ENCODE measurements at regions of chr19 and their contacts with region 1.

Region 1: DNA sequence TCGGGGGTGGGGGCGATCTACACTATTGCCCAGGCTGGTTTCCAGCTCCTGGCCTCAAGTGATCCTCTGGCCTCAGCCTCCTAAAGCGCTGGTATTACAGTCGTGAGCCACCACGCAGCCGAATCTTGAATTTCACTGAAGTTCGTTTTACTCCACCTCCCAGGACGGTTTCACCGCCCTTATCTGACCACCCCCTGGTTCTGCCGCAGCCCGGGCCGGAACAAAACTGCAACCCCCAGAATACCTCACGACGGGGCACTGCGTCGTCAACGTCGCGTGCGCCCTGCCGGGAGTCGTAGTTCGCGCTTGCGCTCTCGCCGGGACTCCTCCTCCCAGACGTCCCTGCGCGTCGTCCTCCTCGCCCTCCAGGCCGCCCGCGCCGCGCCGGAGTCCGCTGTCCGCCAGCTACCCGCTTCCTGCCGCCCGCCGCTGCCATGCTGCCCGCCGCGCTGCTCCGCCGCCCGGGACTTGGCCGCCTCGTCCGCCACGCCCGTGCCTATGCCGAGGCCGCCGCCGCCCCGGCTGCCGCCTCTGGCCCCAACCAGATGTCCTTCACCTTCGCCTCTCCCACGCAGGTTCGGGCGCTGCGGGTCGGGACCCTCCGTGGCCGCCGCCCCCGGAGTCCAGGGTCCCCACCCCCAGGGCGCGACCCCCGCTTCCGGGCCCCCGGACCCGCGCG is at the start of gene ATP5F1D:
- DNase-seq: peak; percentile 85
- ATAC-seq: peak; percentile 67
- H3K4me3 Mint-ChIP-seq: peak within 1 kb of the TSS; percentile 86
- H3K27ac Mint-ChIP-seq: peak within 1 kb of the TSS; percentile 74
- H3K4me1 Mint-ChIP-seq: peaks cover 53% of the 10 kb centered on the region
- H3K27me3 Mint-ChIP-seq: peaks cover 7% of the 10 kb centered on the region
- CTCF ChIP-seq: no peak
- total RNA-seq, gene ATP5F1D: 172 and 185 TPM in 2 replicates

Region 2: DNA sequence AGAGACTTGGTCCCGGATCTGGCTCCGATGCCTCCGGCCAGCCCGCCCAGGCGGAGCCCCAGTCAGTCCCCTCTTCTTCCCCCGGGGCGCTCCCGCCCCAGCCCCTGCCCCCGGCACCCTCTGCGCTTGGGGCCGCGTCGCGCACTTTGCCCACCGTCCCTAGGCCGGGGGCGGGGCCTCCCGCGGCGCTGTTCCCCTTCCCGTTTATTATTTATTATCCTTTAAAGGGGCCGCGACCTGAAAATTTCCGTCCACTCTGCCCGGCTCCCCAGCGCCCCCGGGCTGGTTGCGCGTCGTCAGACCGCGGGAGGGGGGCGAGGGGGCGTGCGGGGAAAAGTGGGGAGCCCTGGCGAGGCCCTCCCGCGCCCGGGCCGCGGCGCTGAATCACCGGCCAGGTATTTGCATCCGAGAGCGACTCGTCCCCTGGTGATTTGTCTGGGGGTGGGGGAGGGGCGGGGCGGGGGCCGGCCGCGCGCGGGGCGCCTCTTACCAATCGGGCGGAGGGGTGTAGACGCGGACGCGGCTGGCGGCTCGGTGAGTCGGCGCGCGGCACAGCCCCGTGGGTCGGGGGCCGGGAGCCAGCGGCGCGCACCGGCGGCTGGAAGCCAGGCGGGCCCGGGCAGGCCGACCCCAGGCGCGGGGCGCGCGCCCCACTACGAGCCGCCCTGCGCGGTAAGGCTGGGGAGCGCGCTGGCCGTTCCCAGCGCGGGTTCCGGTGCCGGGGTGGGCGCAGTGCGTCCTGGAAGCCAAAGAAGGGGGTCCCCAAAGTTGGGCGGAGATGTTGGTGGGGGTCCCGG is 315.8 kb before region 1 on chr19 and contains the start of gene ARID3A:
- CTCF ChIA-PET with region 1: no interaction called
- POLR2A ChIA-PET with region 1: no interaction called
- intact Hi-C with region 1: loop called (anchors 1 kb)
- DNase-seq: peak; percentile 84
- ATAC-seq: peak; percentile 66
- H3K4me3 Mint-ChIP-seq: peak within 1 kb of the TSS; percentile 86
- H3K27ac Mint-ChIP-seq: peak within 1 kb of the TSS; percentile 82
- H3K4me1 Mint-ChIP-seq: peaks cover 22% of the 10 kb centered on the region
- H3K27me3 Mint-ChIP-seq: no peaks in the 10 kb centered on the region
- CTCF ChIP-seq: no peak
- total RNA-seq, gene ARID3A: 67.7 and 74.9 TPM in 2 replicates

Region 3: GRCh38 chr19:1094975-1095701 is 146.4 kb before region 1 on chr19 and contains the start of gene POLR2E:
- CTCF ChIA-PET with region 1: no interaction called
- POLR2A ChIA-PET with region 1: no interaction called
- intact Hi-C with region 1: loop called (anchors 1 kb)
- DNase-seq: peak; percentile 98
- ATAC-seq: peak; percentile 98
- H3K4me3 Mint-ChIP-seq: peak within 1 kb of the TSS; percentile 90
- H3K27ac Mint-ChIP-seq: peak within 1 kb of the TSS; percentile 84
- H3K4me1 Mint-ChIP-seq: peaks cover 45% of the 10 kb centered on the region
- H3K27me3 Mint-ChIP-seq: no peaks in the 10 kb centered on the region
- CTCF ChIP-seq: no peak
- total RNA-seq, gene POLR2E: 173 and 184 TPM in 2 replicates

Region 4: GRCh38 chr19:1275260-1275975 is 33.9 kb after region 1 on chr19 and contains the start of gene FAM174C:
- CTCF ChIA-PET with region 1: interaction called, 19 read pairs
- POLR2A ChIA-PET with region 1: interaction called, 33 read pairs
- intact Hi-C with region 1: no loop called
- DNase-seq: peak; percentile 87
- ATAC-seq: peak; percentile 83
- H3K4me3 Mint-ChIP-seq: peak within 1 kb of the TSS; percentile 84
- H3K27ac Mint-ChIP-seq: peak within 1 kb of the TSS; percentile 88
- H3K4me1 Mint-ChIP-seq: peaks cover 51% of the 10 kb centered on the region
- H3K27me3 Mint-ChIP-seq: no peaks in the 10 kb centered on the region
- CTCF ChIP-seq: no peak
- total RNA-seq, gene FAM174C: 47.9 and 52.0 TPM in 2 replicates

Region 5: GRCh38 chr19:1445185-1445931 is 203.8 kb after region 1 on chr19:
- CTCF ChIA-PET with region 1: interaction called, 10 read pairs
- POLR2A ChIA-PET with region 1: interaction called, 3 read pairs
- intact Hi-C with region 1: no loop called
- DNase-seq: peak; percentile 85
- ATAC-seq: peak; percentile 91
- H3K4me3 Mint-ChIP-seq: peak overlapping the region; percentile 79
- H3K27ac Mint-ChIP-seq: no peak overlapping the region
- H3K4me1 Mint-ChIP-seq: peaks cover 29% of the 10 kb centered on the region
- H3K27me3 Mint-ChIP-seq: peaks cover 21% of the 10 kb centered on the region
- CTCF ChIP-seq: peak; percentile 51